MCF 10A (cell line): ENCODE measurements at regions of chr7 and their contacts with region 1.

Region 1: GRCh38 chr7:97835296-97836138 is 36.7 kb downstream of the ASNS start:
- DNase-seq: peak; percentile 69
- H3K4me3 Mint-ChIP-seq: no peak overlapping the region
- H3K27ac Mint-ChIP-seq: no peak overlapping the region
- H3K4me1 Mint-ChIP-seq: no peaks in the 10 kb centered on the region
- H3K27me3 Mint-ChIP-seq: peaks cover 65% of the 10 kb centered on the region
- CTCF ChIP-seq: peak; percentile 63

Region 2: DNA sequence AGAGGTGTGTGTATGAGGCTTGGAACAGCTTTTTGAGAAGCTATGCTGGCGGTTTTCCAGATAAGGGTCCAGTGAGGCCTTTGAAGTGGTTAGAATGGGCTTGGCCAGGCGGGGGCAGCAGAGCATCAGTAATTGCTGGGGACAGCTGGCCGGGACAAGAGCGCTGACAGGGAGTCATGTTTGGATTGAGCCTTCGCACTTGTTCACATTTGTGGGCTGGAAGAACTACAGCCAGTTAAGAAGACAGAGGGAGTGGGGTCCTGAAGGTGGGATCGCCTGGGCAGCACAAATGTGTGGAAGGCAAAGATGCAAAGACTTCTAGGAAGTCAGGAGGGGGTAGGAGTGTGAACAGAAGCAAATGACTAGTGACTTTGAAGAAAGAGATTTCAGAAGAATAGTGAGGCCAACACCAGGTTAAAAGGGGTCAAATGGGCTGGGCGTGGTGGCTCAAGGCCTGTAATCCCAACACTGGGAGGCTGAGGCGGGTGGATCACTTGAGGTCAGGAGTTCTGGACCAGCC is 730.7 kb before region 1 on chr7:
- CTCF ChIA-PET with region 1: interaction called, 16 read pairs
- POLR2A ChIA-PET with region 1: no interaction called
- intact Hi-C with region 1: loop called (anchors 1 kb)
- DNase-seq: peak; percentile 79
- H3K4me3 Mint-ChIP-seq: no peak overlapping the region
- H3K27ac Mint-ChIP-seq: no peak overlapping the region
- H3K4me1 Mint-ChIP-seq: no peaks in the 10 kb centered on the region
- H3K27me3 Mint-ChIP-seq: peaks cover 32% of the 10 kb centered on the region
- CTCF ChIP-seq: peak; percentile 89

Region 3: DNA sequence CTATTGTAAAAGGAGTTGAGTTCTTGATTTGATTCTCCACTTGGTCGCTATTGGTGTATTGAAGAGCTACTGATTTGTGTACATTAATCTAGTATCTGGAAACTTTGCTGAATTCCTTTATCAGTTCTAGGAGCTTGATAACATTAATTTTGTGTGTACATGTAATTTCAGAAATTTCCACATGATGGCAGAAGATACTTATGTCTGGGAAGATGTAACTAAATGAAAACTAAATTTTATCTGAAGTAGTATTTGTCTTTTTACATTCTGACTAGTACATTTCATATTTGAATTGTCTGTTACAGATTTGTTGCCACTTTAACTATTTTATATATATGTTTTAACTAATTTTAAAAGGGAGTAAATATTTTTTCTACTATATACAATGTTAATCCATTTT is 690.4 kb before region 1 on chr7:
- CTCF ChIA-PET with region 1: interaction called, 5 read pairs
- POLR2A ChIA-PET with region 1: interaction called, 3 read pairs
- intact Hi-C with region 1: loop called (anchors 1 kb)
- DNase-seq: peak; percentile 45
- H3K4me3 Mint-ChIP-seq: no peak overlapping the region
- H3K27ac Mint-ChIP-seq: no peak overlapping the region
- H3K4me1 Mint-ChIP-seq: no peaks in the 10 kb centered on the region
- H3K27me3 Mint-ChIP-seq: no peaks in the 10 kb centered on the region
- CTCF ChIP-seq: peak; percentile 62

Region 4: DNA sequence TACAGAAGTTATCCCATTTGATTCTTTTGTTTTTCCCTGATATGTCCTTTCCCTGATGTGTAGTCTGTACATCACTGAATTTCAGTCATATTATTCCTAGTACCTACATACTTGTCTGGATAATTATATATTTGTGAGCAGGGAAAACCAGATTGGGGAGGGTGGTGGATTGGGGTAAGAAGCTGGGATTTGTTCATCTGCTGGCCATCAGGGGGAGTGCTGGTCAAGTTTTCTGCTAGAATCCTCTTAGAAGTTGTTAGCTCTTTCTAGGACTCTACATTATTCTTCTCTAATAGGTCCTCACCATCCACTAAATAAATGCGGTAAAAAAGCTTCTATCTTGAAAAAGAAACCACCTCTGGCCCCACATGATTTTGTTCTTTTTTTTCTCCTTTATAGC is 336.3 kb before region 1 on chr7:
- CTCF ChIA-PET with region 1: interaction called, 43 read pairs
- POLR2A ChIA-PET with region 1: no interaction called
- intact Hi-C with region 1: loop called (anchors 1 kb)
- DNase-seq: peak; percentile 56
- H3K4me3 Mint-ChIP-seq: no peak overlapping the region
- H3K27ac Mint-ChIP-seq: no peak overlapping the region
- H3K4me1 Mint-ChIP-seq: no peaks in the 10 kb centered on the region
- H3K27me3 Mint-ChIP-seq: peaks cover 31% of the 10 kb centered on the region
- CTCF ChIP-seq: peak; percentile 46

Region 5: DNA sequence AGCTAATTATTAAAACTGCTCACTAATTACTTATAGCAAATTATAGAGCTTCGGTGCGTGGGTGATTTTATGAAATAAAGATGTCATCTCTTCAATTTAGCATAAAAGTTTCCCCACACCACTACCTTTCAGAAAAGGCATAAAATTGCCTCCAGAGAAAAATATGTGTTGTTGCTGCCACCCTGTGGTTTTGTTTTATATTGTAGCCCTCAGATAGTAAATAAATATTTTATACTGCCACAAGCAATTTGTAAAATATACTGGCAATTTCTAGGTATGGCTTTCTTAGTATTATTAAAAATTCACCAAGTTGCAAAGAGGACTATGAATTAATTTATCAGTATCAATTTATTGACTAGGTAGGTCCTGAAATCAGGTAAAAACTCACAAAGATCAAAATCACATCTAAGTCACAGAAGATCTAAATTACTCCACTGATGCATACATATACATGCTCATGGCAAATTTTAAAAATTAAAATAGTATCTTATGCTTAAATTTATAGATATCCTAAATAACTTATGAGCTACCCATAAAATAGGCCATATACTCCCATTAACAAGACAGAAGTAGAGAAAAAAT is 10.2 kb after region 1 on chr7:
- CTCF ChIA-PET with region 1: interaction called, 79 read pairs
- POLR2A ChIA-PET with region 1: no interaction called
- intact Hi-C with region 1: no loop called
- DNase-seq: peak; percentile 43
- H3K4me3 Mint-ChIP-seq: no peak overlapping the region
- H3K27ac Mint-ChIP-seq: no peak overlapping the region
- H3K4me1 Mint-ChIP-seq: no peaks in the 10 kb centered on the region
- H3K27me3 Mint-ChIP-seq: peaks cover 16% of the 10 kb centered on the region
- CTCF ChIP-seq: peak; percentile 24

Region 6: GRCh38 chr7:98014352-98014751 is 178.8 kb after region 1 on chr7:
- CTCF ChIA-PET with region 1: interaction called, 14 read pairs
- POLR2A ChIA-PET with region 1: no interaction called
- intact Hi-C with region 1: no loop called
- DNase-seq: no peak
- H3K4me3 Mint-ChIP-seq: no peak overlapping the region
- H3K27ac Mint-ChIP-seq: no peak overlapping the region
- H3K4me1 Mint-ChIP-seq: no peaks in the 10 kb centered on the region
- H3K27me3 Mint-ChIP-seq: no peaks in the 10 kb centered on the region
- CTCF ChIP-seq: no peak

Region 7: GRCh38 chr7:98051118-98051744 is 215.7 kb after region 1 on chr7:
- CTCF ChIA-PET with region 1: no interaction called
- POLR2A ChIA-PET with region 1: no interaction called
- intact Hi-C with region 1: no loop called
- DNase-seq: no peak
- H3K4me3 Mint-ChIP-seq: no peak overlapping the region
- H3K27ac Mint-ChIP-seq: no peak overlapping the region
- H3K4me1 Mint-ChIP-seq: peaks cover 24% of the 10 kb centered on the region
- H3K27me3 Mint-ChIP-seq: no peaks in the 10 kb centered on the region
- CTCF ChIP-seq: no peak

Region 8: DNA sequence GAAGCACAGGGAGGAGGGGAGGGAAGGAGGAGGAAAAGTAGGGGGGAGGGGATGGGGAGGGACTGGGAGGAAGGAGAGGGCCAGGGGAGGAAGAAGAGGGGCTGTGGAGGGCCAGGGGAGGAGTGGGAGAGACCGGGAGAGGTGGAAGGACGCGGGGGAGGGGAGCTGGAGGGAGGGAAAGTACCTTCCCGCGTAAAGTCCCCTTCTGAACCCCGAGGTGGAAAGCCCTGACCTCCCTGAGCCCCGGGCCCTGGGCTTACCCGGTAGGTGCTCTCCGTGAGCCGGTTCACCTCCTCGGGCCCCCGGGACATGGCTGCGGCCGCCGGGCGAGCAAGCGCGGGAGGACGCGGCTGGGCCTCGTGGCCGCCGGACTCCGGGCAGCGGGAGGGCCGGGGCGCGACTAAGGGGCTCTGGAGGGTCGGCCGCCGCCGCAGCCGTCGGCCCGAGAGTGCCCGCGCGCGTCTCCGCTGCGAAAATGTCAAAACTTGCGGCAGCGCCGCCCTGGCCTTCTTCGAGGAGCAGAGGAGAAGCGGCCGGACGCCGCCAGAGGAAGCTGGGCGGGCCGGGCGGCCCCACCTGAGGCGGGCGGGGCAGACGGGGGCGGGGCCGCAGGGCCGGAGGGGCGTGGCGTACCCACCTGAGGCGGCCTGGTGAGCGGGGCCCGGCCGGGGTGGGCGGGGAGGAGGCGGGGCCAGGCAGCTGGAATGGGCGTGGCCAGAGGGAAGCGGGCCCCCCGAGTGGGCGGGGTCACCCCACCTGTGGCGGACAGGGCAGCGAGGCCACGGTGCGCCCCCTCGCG is 565.2 kb after region 1 on chr7 and contains the start of gene BAIAP2L1:
- CTCF ChIA-PET with region 1: no interaction called
- POLR2A ChIA-PET with region 1: no interaction called
- intact Hi-C with region 1: no loop called
- DNase-seq: peak; percentile 91
- H3K4me3 Mint-ChIP-seq: peak within 1 kb of the TSS; percentile 85
- H3K27ac Mint-ChIP-seq: peak within 1 kb of the TSS; percentile 94
- H3K4me1 Mint-ChIP-seq: peaks cover 17% of the 10 kb centered on the region
- H3K27me3 Mint-ChIP-seq: no peaks in the 10 kb centered on the region
- CTCF ChIP-seq: no peak
- total RNA-seq, gene BAIAP2L1: 60.2 and 60.7 TPM in 2 replicates